ENCODE measurements at regions of chr2 and their contacts with region 1.

Region 1: GRCh38 chr2:95076784-95077529 is 44.7 kb downstream of the MRPS5 start:
- DNase-seq: peak; percentile 85 to 91 (median 87)
- H3K4me3 ChIP-seq: peak overlapping the region; percentile 42 to 54
- H3K4me3 Mint-ChIP-seq: peak overlapping the region; percentile 78 to 90 (median 84)
- H3K27ac ChIP-seq: peak overlapping the region; percentile 56
- H3K27ac Mint-ChIP-seq: peak overlapping the region; percentile 89 to 94 (median 90)
- H3K4me1 ChIP-seq: peaks cover 72% of the 10 kb centered on the region
- H3K4me1 Mint-ChIP-seq: peaks cover 39 to 76% (median 66%) of the 10 kb centered on the region in 4 donors
- H3K27me3 ChIP-seq: no peaks in the 10 kb centered on the region
- H3K27me3 Mint-ChIP-seq: no peaks in the 10 kb centered on the region

Region 2: GRCh38 chr2:94861308-94862152 is 215.4 kb before region 1 on chr2:
- CTCF ChIA-PET with region 1: no interaction called
- POLR2A ChIA-PET with region 1: no interaction called
- intact Hi-C with region 1: no loop called
- DNase-seq: no peak
- H3K4me3 ChIP-seq: no peak overlapping the region
- H3K4me3 Mint-ChIP-seq: no peak overlapping the region
- H3K27ac ChIP-seq: no peak overlapping the region
- H3K27ac Mint-ChIP-seq: no peak overlapping the region
- H3K4me1 ChIP-seq: no peaks in the 10 kb centered on the region
- H3K4me1 Mint-ChIP-seq: no peaks in the 10 kb centered on the region
- H3K27me3 ChIP-seq: no peaks in the 10 kb centered on the region
- H3K27me3 Mint-ChIP-seq: peaks cover 21 to 26% of the 10 kb centered on the region in 2 donors

Region 3: GRCh38 chr2:95034221-95034620 is 42.7 kb before region 1 on chr2:
- CTCF ChIA-PET with region 1: interaction called, 15 read pairs
- POLR2A ChIA-PET with region 1: interaction called, 8 read pairs
- intact Hi-C with region 1: no loop called
- DNase-seq: no peak
- H3K4me3 ChIP-seq: no peak overlapping the region
- H3K4me3 Mint-ChIP-seq: no peak overlapping the region
- H3K27ac ChIP-seq: no peak overlapping the region
- H3K27ac Mint-ChIP-seq: peak overlapping the region in 4 of 7 donors; percentile 10 to 85 (median 34)
- H3K4me1 ChIP-seq: peaks cover 75% of the 10 kb centered on the region
- H3K4me1 Mint-ChIP-seq: peaks cover 40 to 92% (median 71%) of the 10 kb centered on the region in 4 donors
- H3K27me3 ChIP-seq: no peaks in the 10 kb centered on the region
- H3K27me3 Mint-ChIP-seq: no peaks in the 10 kb centered on the region

Region 4: GRCh38 chr2:95062242-95063085 is 14.5 kb before region 1 on chr2:
- CTCF ChIA-PET with region 1: interaction called, 153 read pairs
- POLR2A ChIA-PET with region 1: interaction called, 225 read pairs
- intact Hi-C with region 1: loop called (anchors 2 kb)
- DNase-seq: no peak
- H3K4me3 ChIP-seq: no peak overlapping the region
- H3K4me3 Mint-ChIP-seq: peak overlapping the region; percentile 37 to 79 (median 64)
- H3K27ac ChIP-seq: peak overlapping the region; percentile 12
- H3K27ac Mint-ChIP-seq: peak overlapping the region; percentile 54 to 96 (median 89)
- H3K4me1 ChIP-seq: peaks cover 30% of the 10 kb centered on the region
- H3K4me1 Mint-ChIP-seq: peaks cover 17 to 37% (median 29%) of the 10 kb centered on the region in 4 donors
- H3K27me3 ChIP-seq: no peaks in the 10 kb centered on the region
- H3K27me3 Mint-ChIP-seq: no peaks in the 10 kb centered on the region

Region 5: DNA sequence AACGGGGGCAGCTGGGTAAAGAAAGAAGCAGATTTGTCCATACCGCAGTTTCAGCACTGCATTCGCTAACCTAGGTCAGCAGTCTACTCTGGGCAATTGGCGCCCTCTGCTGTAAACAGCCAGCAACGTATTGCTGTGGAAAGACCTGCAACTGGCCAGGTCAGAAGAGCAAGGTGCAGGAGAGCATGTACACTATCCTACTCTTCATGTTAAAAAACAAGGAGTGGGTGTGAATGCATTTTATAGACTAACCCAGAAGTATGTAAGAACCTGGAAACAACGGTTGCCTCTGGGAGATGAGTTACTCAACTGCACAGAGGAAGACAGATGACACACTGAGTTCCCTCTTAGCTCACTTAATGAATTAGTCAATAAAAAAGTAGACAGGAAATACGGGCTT is 38.5 kb after region 1 on chr2:
- CTCF ChIA-PET with region 1: interaction called, 264 read pairs
- POLR2A ChIA-PET with region 1: interaction called, 19 read pairs
- intact Hi-C with region 1: loop called (anchors 1 kb)
- DNase-seq: peak; percentile 66 to 76 (median 69)
- H3K4me3 ChIP-seq: no peak overlapping the region
- H3K4me3 Mint-ChIP-seq: peak overlapping the region in 1 of 8 donors; percentile 28
- H3K27ac ChIP-seq: no peak overlapping the region
- H3K27ac Mint-ChIP-seq: peak overlapping the region in 3 of 7 donors; percentile 66 to 75 (median 69)
- H3K4me1 ChIP-seq: peaks cover 36% of the 10 kb centered on the region
- H3K4me1 Mint-ChIP-seq: peaks cover 34 to 46% (median 36%) of the 10 kb centered on the region in 4 donors
- H3K27me3 ChIP-seq: no peaks in the 10 kb centered on the region
- H3K27me3 Mint-ChIP-seq: no peaks in the 10 kb centered on the region

Region 6: GRCh38 chr2:95165129-95166064 is 88.4 kb after region 1 on chr2 and contains the start of gene ZNF2:
- CTCF ChIA-PET with region 1: interaction called, 17 read pairs
- POLR2A ChIA-PET with region 1: interaction called, 11 read pairs
- intact Hi-C with region 1: no loop called
- DNase-seq: peak; percentile 95 to 98 (median 96)
- H3K4me3 ChIP-seq: peak within 1 kb of the TSS; percentile 88 to 97
- H3K4me3 Mint-ChIP-seq: peak within 1 kb of the TSS; percentile 95 to 100 (median 100)
- H3K27ac ChIP-seq: peak within 1 kb of the TSS; percentile 89
- H3K27ac Mint-ChIP-seq: peak within 1 kb of the TSS; percentile 94 to 99 (median 98)
- H3K4me1 ChIP-seq: peaks cover 21% of the 10 kb centered on the region
- H3K4me1 Mint-ChIP-seq: peaks cover 24 to 40% (median 35%) of the 10 kb centered on the region in 4 donors
- H3K27me3 ChIP-seq: no peaks in the 10 kb centered on the region
- H3K27me3 Mint-ChIP-seq: no peaks in the 10 kb centered on the region
- total RNA-seq, gene ZNF2: 8.3 to 10.1 TPM

Measured in CD4-positive, alpha-beta memory T cell (primary cell).